Activated CD8-positive, alpha-beta memory T cell treated with anti-CD3 and anti-CD28 coated beads, Interleukin-2, amount 10 ng/mL, durations not matched to agents 7 days and 5 days (primary cell): ENCODE measurements at regions of chr17 and their contacts with region 1.

Region 1: GRCh38 chr17:7687908-7688807 is at the start of gene WRAP53:
- DNase-seq: peak; percentile 98
- ATAC-seq: peak; percentile 82
- H3K4me3 Mint-ChIP-seq: peak within 1 kb of the TSS; percentile 96
- H3K27ac Mint-ChIP-seq: peak within 1 kb of the TSS; percentile 97
- H3K4me1 Mint-ChIP-seq: peaks cover 33% of the 10 kb centered on the region
- H3K27me3 Mint-ChIP-seq: no peaks in the 10 kb centered on the region
- total RNA-seq, gene WRAP53: 28.0 to 29.0 TPM

Region 2: DNA sequence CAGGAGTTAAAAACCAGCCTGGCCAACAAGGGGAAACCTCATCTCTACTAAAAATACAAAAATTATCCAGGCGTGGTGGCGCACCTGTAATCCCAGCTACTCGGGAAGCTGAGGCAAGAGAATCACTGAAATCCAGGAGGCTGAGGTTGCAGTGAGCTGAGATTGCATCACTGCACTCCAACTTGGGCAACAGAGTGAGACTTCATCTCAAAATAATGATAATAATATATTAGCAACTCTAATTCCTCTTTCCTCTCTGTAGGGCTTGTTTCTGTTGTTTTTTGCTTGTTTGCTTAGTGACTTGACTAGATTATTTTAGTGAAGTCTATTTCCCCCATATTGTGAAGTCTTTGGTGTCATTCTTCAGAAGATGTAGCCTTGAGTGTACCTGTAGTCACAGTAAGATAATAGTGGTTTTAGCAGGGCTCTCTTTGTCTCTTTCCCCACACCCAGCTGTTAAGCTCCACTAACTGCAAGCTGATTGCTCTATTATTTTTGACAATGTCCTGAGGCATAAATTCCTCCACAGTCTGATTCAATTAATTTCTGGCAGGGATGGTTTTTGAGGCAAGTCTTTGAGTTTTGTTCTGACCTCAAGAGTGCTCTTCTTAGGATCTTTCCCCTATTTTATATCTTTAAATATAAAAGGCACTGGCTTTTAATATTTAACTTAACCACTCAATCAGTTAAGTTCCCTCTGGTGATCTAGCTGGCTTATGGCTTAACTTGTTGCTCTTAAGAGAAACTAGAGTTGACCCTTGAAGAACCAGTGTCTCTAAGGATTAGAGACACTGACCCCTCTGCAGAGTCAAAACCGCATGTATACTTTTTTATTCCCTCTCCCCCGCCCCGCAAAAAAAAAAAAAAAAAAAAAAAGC is 157.9 kb before region 1 on chr17:
- CTCF ChIA-PET with region 1: no interaction called
- DNase-seq: no peak
- ATAC-seq: no peak
- H3K4me3 Mint-ChIP-seq: no peak overlapping the region
- H3K27ac Mint-ChIP-seq: no peak overlapping the region
- H3K4me1 Mint-ChIP-seq: no peaks in the 10 kb centered on the region
- H3K27me3 Mint-ChIP-seq: no peaks in the 10 kb centered on the region

Region 3: DNA sequence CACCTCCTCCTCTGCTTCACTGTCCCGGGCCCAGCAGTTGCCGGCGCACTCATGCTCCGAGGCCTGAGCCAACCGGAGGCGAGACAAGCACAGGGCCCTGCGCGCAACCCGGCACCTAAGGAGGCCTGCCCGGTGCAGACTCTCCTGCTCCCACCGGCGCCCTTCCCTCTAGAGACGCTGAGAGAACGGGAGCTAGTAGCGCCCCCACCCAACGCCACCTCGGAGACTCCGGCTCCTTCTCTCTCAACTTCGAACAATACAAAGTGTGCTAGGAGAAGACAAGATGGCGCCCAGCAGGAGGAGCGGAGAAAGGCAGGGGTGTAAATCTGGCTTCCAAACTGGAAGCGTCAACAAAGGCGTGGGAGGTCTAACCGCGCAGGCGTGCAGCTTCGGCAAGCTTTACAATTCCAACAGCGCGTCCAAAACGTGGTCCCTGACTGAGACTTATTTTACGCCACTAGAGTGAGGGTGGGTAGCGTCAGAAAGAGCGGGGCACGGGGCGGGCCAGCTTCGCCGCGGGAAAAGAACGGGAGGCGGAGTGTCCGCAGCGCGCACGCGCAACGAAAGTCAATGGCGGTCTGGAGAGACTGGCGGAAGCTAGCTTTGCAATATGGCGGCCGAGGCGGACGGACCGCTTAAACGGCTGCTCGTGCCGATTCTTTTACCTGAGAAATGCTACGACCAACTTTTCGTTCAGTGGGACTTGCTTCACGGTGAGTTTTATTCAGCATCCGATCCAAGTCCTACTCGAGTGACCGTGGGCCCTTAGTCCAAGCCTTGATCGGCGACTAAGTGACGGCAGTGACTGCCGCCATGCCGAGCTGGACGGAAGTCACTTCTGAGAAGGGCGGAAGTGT is 104.7 kb before region 1 on chr17 and contains the start of gene MPDU1:
- CTCF ChIA-PET with region 1: interaction called, 81 read pairs
- DNase-seq: peak; percentile 97
- ATAC-seq: peak; percentile 81
- H3K4me3 Mint-ChIP-seq: peak within 1 kb of the TSS; percentile 84
- H3K27ac Mint-ChIP-seq: peak within 1 kb of the TSS; percentile 99
- H3K4me1 Mint-ChIP-seq: peaks cover 62% of the 10 kb centered on the region
- H3K27me3 Mint-ChIP-seq: no peaks in the 10 kb centered on the region
- total RNA-seq, gene MPDU1: 57.6 to 76.9 TPM

Region 4: DNA sequence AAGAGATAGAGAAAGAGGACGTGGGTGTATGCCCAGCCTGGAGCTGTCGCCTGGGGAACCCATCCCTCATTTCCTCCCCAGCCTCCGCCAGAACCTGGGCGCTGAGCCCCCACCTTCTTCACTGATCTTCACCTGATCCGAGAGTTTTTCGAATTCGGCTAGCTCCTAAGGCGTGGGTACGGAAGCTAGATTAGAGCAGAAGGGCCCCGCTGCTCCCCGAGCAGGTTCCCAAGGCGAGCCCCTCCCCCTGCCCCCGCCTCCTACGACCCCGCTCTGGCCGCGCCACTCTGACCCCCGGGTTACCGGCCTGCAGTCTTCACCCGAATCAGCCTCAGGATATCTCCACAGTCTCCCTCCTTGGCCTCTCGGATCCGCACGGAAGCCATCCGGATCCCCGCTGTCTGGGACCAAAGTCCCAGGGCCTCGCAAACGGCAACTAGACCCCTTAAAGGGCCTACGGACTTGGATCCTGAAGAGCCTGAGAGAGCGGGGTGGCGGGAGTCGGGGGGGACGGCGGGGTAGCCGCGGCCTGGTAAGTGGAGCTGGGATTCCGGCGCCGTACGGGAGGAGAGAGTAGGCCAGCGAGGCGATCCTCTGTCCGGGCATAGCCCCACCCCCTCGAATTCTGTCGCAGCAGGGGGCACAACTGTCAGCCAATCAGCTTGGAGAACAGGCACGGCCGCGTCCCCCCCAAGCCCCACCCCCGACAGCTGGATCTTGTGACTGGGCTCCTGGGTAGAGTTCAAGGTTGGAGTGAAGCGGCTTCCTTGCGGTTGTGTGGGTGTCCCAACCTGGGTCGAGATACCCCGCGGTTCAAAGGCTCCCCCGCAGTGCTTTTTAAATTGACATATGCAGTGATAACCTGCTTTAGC is 60.7 kb before region 1 on chr17 and contains the start of gene SAT2:
- CTCF ChIA-PET with region 1: interaction called, 77 read pairs
- DNase-seq: peak; percentile 95
- ATAC-seq: peak; percentile 98
- H3K4me3 Mint-ChIP-seq: peak within 1 kb of the TSS; percentile 86
- H3K27ac Mint-ChIP-seq: peak within 1 kb of the TSS; percentile 70
- H3K4me1 Mint-ChIP-seq: peaks cover 14% of the 10 kb centered on the region
- H3K27me3 Mint-ChIP-seq: no peaks in the 10 kb centered on the region
- total RNA-seq, gene SAT2: 21.5 to 28.0 TPM

Region 5: GRCh38 chr17:7673239-7673638 is 14.9 kb before region 1 on chr17:
- CTCF ChIA-PET with region 1: interaction called, 54 read pairs
- DNase-seq: peak; percentile 55
- ATAC-seq: no peak
- H3K4me3 Mint-ChIP-seq: no peak overlapping the region
- H3K27ac Mint-ChIP-seq: no peak overlapping the region
- H3K4me1 Mint-ChIP-seq: no peaks in the 10 kb centered on the region
- H3K27me3 Mint-ChIP-seq: no peaks in the 10 kb centered on the region

Region 6: GRCh38 chr17:7716901-7717755 is 29.0 kb after region 1 on chr17 and contains the start of gene DNAH2:
- CTCF ChIA-PET with region 1: interaction called, 11 read pairs
- DNase-seq: peak; percentile 83
- ATAC-seq: peak; percentile 84
- H3K4me3 Mint-ChIP-seq: peak within 1 kb of the TSS; percentile 77
- H3K27ac Mint-ChIP-seq: peak within 1 kb of the TSS; percentile 38
- H3K4me1 Mint-ChIP-seq: peaks cover 34% of the 10 kb centered on the region
- H3K27me3 Mint-ChIP-seq: peaks cover 73% of the 10 kb centered on the region
- total RNA-seq, gene DNAH2: not detected